ENCODE measurements at regions of chr17 and their contacts with region 1.

Region 1: DNA sequence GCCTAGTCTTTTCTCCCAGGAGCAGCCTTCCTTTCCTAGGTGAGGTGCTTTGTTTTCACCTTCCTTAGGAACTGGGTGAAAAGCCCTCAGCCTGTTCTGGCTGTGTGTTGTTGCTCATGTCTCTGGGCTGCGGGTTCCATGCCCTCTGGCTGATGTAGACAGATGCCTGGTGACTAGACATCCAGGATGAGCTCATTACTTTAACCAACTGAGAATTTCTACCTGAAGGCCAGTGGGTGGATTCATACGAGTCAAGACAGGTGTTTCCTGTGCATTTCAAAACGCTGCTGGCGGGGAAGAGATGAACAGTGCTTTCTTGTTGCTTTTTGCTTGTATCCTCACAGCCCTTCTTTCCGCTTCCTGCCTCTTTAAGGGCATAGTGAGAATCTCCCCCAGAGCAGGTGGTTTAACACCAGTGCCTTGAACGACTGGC is 22.3 kb downstream of the SAP30BP start:
- DNase-seq: peak; percentile 76
- ATAC-seq: peak; percentile 69
- H3K4me3 Mint-ChIP-seq: peak overlapping the region; percentile 37
- H3K27ac Mint-ChIP-seq: peak overlapping the region; percentile 83
- H3K4me1 Mint-ChIP-seq: peaks cover 60% of the 10 kb centered on the region
- H3K27me3 Mint-ChIP-seq: no peaks in the 10 kb centered on the region

Region 2: DNA sequence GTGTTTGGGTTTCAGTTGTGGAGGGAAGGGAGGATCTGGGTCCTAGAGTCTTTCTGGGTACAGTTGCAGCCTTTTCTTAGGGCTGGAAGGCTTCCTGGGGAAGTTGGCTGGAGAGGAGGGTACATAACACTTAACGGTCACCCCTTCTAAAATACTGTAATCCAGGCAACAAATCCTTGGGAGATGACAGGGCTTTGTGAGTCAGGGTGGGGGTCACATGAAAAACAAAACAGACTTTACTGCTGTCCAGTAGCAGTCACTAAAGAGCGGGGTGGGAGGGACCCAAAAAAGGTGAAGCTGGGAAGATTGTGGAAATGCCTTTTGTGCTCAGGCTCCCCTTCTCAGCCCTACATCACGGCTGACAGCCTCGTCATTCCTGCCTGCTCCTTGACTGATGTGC is 16.0 kb before region 1 on chr17:
- CTCF ChIA-PET with region 1: interaction called, 39 read pairs
- POLR2A ChIA-PET with region 1: interaction called, 7 read pairs
- DNase-seq: no peak
- ATAC-seq: no peak
- H3K4me3 Mint-ChIP-seq: no peak overlapping the region
- H3K27ac Mint-ChIP-seq: no peak overlapping the region
- H3K4me1 Mint-ChIP-seq: peaks cover 17% of the 10 kb centered on the region
- H3K27me3 Mint-ChIP-seq: no peaks in the 10 kb centered on the region

Measured in activated CD8-positive, alpha-beta T cell treated with anti-CD3 and anti-CD28 coated beads, Interleukin-2, amount 10 ng/mL, durations not matched to agents 7 days and 5 days (primary cell).